ENCODE measurements at regions of chr3 and their contacts with region 1.

Region 1: GRCh38 chr3:187745201-187746058 is at the start of gene BCL6:
- DNase-seq: peak; percentile 77
- ATAC-seq: peak; percentile 60
- H3K4me3 Mint-ChIP-seq: peak within 1 kb of the TSS; percentile 98
- H3K27ac Mint-ChIP-seq: peak within 1 kb of the TSS; percentile 98
- H3K4me1 Mint-ChIP-seq: peaks cover 79% of the 10 kb centered on the region
- H3K27me3 Mint-ChIP-seq: no peaks in the 10 kb centered on the region
- CTCF ChIP-seq: no peak
- total RNA-seq, gene BCL6: 100 and 112 TPM in 2 replicates

Region 2: DNA sequence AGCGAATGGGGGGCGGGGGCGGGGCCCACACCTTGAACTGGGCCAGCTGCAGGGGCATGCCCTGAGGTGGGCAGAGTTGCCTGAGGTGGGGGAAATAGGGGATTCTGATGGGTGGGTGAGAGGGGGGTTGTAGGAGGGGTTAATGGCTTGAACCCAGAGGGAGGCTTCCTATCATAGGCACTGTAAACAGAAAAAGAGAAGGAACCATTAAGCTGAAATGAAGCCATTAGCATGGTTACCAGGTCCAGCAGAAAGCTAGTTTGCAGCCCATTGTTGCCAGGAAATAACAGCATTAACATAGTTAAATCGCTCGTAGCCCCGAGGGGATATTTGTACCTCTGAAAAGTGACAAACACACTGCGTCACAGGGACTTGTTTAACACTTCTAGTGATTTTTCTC is 1665.5 kb before region 1 on chr3:
- CTCF ChIA-PET with region 1: no interaction called
- POLR2A ChIA-PET with region 1: no interaction called
- intact Hi-C with region 1: no loop called
- DNase-seq: no peak
- ATAC-seq: no peak
- H3K4me3 Mint-ChIP-seq: no peak overlapping the region
- H3K27ac Mint-ChIP-seq: no peak overlapping the region
- H3K4me1 Mint-ChIP-seq: no peaks in the 10 kb centered on the region
- H3K27me3 Mint-ChIP-seq: no peaks in the 10 kb centered on the region
- CTCF ChIP-seq: no peak

Region 3: DNA sequence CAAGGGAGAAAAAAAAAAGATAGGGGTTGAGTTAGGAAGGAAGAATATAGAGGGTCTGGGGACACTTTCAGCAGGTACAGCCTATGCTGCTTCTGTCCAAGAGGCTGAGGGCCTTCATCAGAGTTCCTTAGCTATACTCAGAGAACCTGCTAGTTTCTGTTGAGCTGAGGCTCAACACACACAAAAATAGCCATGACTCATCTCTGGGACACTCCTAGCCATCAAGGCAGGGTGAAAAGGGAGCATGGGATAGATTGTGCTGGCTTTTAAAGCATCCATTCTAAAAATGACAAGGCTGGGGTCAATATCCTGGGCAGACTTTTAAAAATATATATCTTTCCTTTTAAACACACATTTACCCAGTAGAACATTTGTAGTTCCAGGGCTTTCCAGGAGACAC is 40.3 kb before region 1 on chr3:
- CTCF ChIA-PET with region 1: no interaction called
- POLR2A ChIA-PET with region 1: no interaction called
- intact Hi-C with region 1: no loop called
- DNase-seq: no peak
- ATAC-seq: no peak
- H3K4me3 Mint-ChIP-seq: no peak overlapping the region
- H3K27ac Mint-ChIP-seq: no peak overlapping the region
- H3K4me1 Mint-ChIP-seq: no peaks in the 10 kb centered on the region
- H3K27me3 Mint-ChIP-seq: no peaks in the 10 kb centered on the region
- CTCF ChIP-seq: no peak

Region 4: GRCh38 chr3:187935623-187936156 is 190.3 kb after region 1 on chr3:
- CTCF ChIA-PET with region 1: interaction called, 6 read pairs
- POLR2A ChIA-PET with region 1: interaction called, 15 read pairs
- intact Hi-C with region 1: loop called (anchors 2 kb)
- DNase-seq: peak; percentile 61
- ATAC-seq: peak; percentile 91
- H3K4me3 Mint-ChIP-seq: peak overlapping the region; percentile 77
- H3K27ac Mint-ChIP-seq: peak overlapping the region; percentile 90
- H3K4me1 Mint-ChIP-seq: peaks cover 31% of the 10 kb centered on the region
- H3K27me3 Mint-ChIP-seq: peaks cover 33% of the 10 kb centered on the region
- CTCF ChIP-seq: no peak

Region 5: GRCh38 chr3:188154014-188154808 is 408.8 kb after region 1 on chr3 and contains the start of gene LPP:
- CTCF ChIA-PET with region 1: interaction called, 14 read pairs
- POLR2A ChIA-PET with region 1: interaction called, 63 read pairs
- intact Hi-C with region 1: loop called (anchors 1 kb)
- DNase-seq: peak; percentile 88
- ATAC-seq: peak; percentile 89
- H3K4me3 Mint-ChIP-seq: peak within 1 kb of the TSS; percentile 96
- H3K27ac Mint-ChIP-seq: peak within 1 kb of the TSS; percentile 92
- H3K4me1 Mint-ChIP-seq: peaks cover 51% of the 10 kb centered on the region
- H3K27me3 Mint-ChIP-seq: no peaks in the 10 kb centered on the region
- CTCF ChIP-seq: no peak
- total RNA-seq, gene LPP: 49.5 and 60.1 TPM in 2 replicates

Region 6: GRCh38 chr3:188303286-188303813 is 557.9 kb after region 1 on chr3:
- CTCF ChIA-PET with region 1: interaction called, 10 read pairs
- POLR2A ChIA-PET with region 1: interaction called, 11 read pairs
- intact Hi-C with region 1: no loop called
- DNase-seq: no peak
- ATAC-seq: no peak
- H3K4me3 Mint-ChIP-seq: no peak overlapping the region
- H3K27ac Mint-ChIP-seq: no peak overlapping the region
- H3K4me1 Mint-ChIP-seq: peaks cover 66% of the 10 kb centered on the region
- H3K27me3 Mint-ChIP-seq: no peaks in the 10 kb centered on the region
- CTCF ChIP-seq: no peak

Region 7: GRCh38 chr3:188400494-188401243 is 655.2 kb after region 1 on chr3:
- CTCF ChIA-PET with region 1: interaction called, 41 read pairs
- POLR2A ChIA-PET with region 1: interaction called, 68 read pairs
- intact Hi-C with region 1: loop called (anchors 1 kb)
- DNase-seq: no peak
- ATAC-seq: peak; percentile 82
- H3K4me3 Mint-ChIP-seq: peak overlapping the region; percentile 56
- H3K27ac Mint-ChIP-seq: peak overlapping the region; percentile 91
- H3K4me1 Mint-ChIP-seq: peaks cover 93% of the 10 kb centered on the region
- H3K27me3 Mint-ChIP-seq: no peaks in the 10 kb centered on the region
- CTCF ChIP-seq: no peak

Region 8: GRCh38 chr3:188584162-188584529 is 838.7 kb after region 1 on chr3:
- CTCF ChIA-PET with region 1: interaction called, 45 read pairs
- POLR2A ChIA-PET with region 1: interaction called, 26 read pairs
- intact Hi-C with region 1: loop called (anchors 1 kb)
- DNase-seq: no peak
- ATAC-seq: peak; percentile 8
- H3K4me3 Mint-ChIP-seq: no peak overlapping the region
- H3K27ac Mint-ChIP-seq: no peak overlapping the region
- H3K4me1 Mint-ChIP-seq: peaks cover 31% of the 10 kb centered on the region
- H3K27me3 Mint-ChIP-seq: no peaks in the 10 kb centered on the region
- CTCF ChIP-seq: no peak

Region 9: DNA sequence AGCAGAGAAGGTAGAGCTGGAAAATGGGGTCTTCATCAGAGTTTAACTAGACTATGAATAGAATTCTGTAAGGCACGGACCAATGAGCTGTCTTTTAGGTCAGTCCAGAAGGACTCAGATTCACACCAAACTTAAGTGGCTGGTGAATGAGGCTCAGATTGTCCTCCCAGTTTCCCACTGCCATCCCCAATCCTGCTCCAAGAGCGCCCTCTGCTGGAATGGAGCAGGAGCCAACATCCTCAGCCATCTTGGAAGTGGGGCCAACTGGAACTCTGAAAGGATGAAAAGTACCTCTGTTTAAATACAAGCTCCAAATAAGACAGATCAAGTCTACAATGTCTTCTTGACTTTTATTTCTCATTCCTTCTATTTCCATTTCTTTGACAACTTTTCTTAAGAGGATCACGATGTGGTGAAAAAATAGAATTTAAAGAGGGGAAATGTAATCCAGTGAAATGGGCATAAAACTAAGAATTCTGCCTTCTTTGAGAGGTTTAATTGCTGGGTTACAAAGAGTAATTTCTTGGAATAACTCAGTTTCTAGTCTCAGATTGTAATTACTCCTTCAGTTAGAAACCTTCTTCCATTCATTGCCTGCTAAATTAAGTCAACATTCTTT is 1209.3 kb after region 1 on chr3:
- CTCF ChIA-PET with region 1: interaction called, 545 read pairs
- POLR2A ChIA-PET with region 1: interaction called, 137 read pairs
- intact Hi-C with region 1: loop called (anchors 1 kb)
- DNase-seq: peak; percentile 60
- ATAC-seq: peak; percentile 66
- H3K4me3 Mint-ChIP-seq: no peak overlapping the region
- H3K27ac Mint-ChIP-seq: no peak overlapping the region
- H3K4me1 Mint-ChIP-seq: peaks cover 25% of the 10 kb centered on the region
- H3K27me3 Mint-ChIP-seq: peaks cover 1% of the 10 kb centered on the region
- CTCF ChIP-seq: no peak